A673 (cell line): ENCODE measurements at regions of chr3 and their contacts with region 1.

Region 1: GRCh38 chr3:63349583-63350521 is 71.7 kb downstream of the SYNPR start:
- DNase-seq: peak; percentile 68
- H3K4me3 ChIP-seq: no peak overlapping the region
- H3K27ac ChIP-seq: no peak overlapping the region
- H3K4me1 ChIP-seq: peaks cover 6% of the 10 kb centered on the region
- H3K27me3 ChIP-seq: no peaks in the 10 kb centered on the region
- CTCF ChIP-seq: peak; percentile 72

Region 2: GRCh38 chr3:63565220-63565619 is 215.4 kb after region 1 on chr3:
- CTCF ChIA-PET with region 1: no interaction called
- POLR2A ChIA-PET with region 1: no interaction called
- intact Hi-C with region 1: loop called (anchors 10 kb)
- DNase-seq: peak; percentile 1
- H3K4me3 ChIP-seq: no peak overlapping the region
- H3K27ac ChIP-seq: no peak overlapping the region
- H3K4me1 ChIP-seq: peaks cover 3% of the 10 kb centered on the region
- H3K27me3 ChIP-seq: no peaks in the 10 kb centered on the region
- CTCF ChIP-seq: peak; percentile 29

Region 3: GRCh38 chr3:63791974-63792545 is 442.2 kb after region 1 on chr3:
- CTCF ChIA-PET with region 1: no interaction called
- POLR2A ChIA-PET with region 1: no interaction called
- intact Hi-C with region 1: loop called (anchors 2 kb)
- DNase-seq: peak; percentile 12
- H3K4me3 ChIP-seq: no peak overlapping the region
- H3K27ac ChIP-seq: no peak overlapping the region
- H3K4me1 ChIP-seq: no peaks in the 10 kb centered on the region
- H3K27me3 ChIP-seq: no peaks in the 10 kb centered on the region
- CTCF ChIP-seq: peak; percentile 35; the same call in 1 of the 2 replicates

Region 4: GRCh38 chr3:63818281-63819150 is 468.7 kb after region 1 on chr3:
- CTCF ChIA-PET with region 1: interaction called, 4 read pairs
- POLR2A ChIA-PET with region 1: no interaction called
- intact Hi-C with region 1: loop called (anchors 1 kb)
- DNase-seq: peak; percentile 55
- H3K4me3 ChIP-seq: no peak overlapping the region
- H3K27ac ChIP-seq: no peak overlapping the region
- H3K4me1 ChIP-seq: no peaks in the 10 kb centered on the region
- H3K27me3 ChIP-seq: no peaks in the 10 kb centered on the region
- CTCF ChIP-seq: peak; percentile 67

Region 5: GRCh38 chr3:63993653-63994079 is 643.8 kb after region 1 on chr3:
- CTCF ChIA-PET with region 1: no interaction called
- POLR2A ChIA-PET with region 1: no interaction called
- intact Hi-C with region 1: loop called (anchors 10 kb)
- DNase-seq: peak; percentile 72
- H3K4me3 ChIP-seq: no peak overlapping the region
- H3K27ac ChIP-seq: no peak overlapping the region
- H3K4me1 ChIP-seq: no peaks in the 10 kb centered on the region
- H3K27me3 ChIP-seq: no peaks in the 10 kb centered on the region
- CTCF ChIP-seq: peak; percentile 77

Region 6: GRCh38 chr3:64484289-64484992 is 1134.6 kb after region 1 on chr3:
- CTCF ChIA-PET with region 1: no interaction called
- POLR2A ChIA-PET with region 1: no interaction called
- intact Hi-C with region 1: loop called (anchors 10 kb)
- DNase-seq: peak; percentile 68
- H3K4me3 ChIP-seq: no peak overlapping the region
- H3K27ac ChIP-seq: no peak overlapping the region
- H3K4me1 ChIP-seq: no peaks in the 10 kb centered on the region
- H3K27me3 ChIP-seq: no peaks in the 10 kb centered on the region
- CTCF ChIP-seq: peak; percentile 66